Activated CD4-positive, alpha-beta T cell treated with anti-CD3 and anti-CD28 coated beads, Interleukin-2, amount 10 ng/mL, durations not matched to agents 24 days and 14 days (primary cell): ENCODE measurements at regions of chr19 and their contacts with region 1.

Region 1: DNA sequence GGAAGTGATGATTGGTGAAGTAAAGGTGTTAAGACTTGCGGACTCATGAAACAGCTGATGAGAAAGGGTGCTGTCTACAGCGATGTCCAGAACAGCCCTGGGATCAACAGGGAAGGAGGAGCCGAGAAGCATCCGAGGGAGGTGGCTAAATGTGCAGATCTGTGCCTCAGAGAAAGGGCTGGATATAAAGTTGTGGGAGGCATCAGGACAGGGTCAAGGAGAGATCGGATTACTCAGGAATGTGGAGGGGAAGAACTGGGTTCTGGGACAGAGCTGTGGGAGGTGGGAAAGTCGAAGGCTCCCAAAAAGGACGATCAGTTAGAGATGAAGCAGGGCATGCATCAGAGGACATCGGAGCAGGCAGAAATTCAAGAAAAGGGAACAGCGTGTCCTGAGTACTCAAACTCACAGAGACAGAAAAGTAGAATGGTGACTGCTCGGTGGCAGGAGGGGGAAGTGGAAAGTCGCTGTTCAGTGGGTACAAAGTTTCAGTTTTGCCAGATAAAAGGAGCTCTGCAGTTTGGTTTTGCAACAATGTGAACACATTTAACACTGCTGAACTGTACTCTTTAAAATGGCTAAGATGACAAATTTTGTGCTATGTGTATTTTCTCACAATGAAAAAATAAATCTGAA is 1.9 kb downstream of the SIGLEC14 start:
- DNase-seq: no peak
- H3K4me3 Mint-ChIP-seq: no peak overlapping the region
- H3K27ac Mint-ChIP-seq: no peak overlapping the region
- H3K4me1 Mint-ChIP-seq: peaks cover 5% of the 10 kb centered on the region
- H3K27me3 Mint-ChIP-seq: peaks cover 28% of the 10 kb centered on the region

Region 2: GRCh38 chr19:51628153-51628939 is 16.4 kb before region 1 on chr19:
- intact Hi-C with region 1: loop called (anchors 1 kb)
- DNase-seq: no peak
- H3K4me3 Mint-ChIP-seq: no peak overlapping the region
- H3K27ac Mint-ChIP-seq: no peak overlapping the region
- H3K4me1 Mint-ChIP-seq: no peaks in the 10 kb centered on the region
- H3K27me3 Mint-ChIP-seq: peaks cover 5% of the 10 kb centered on the region